Naive thymus-derived CD4-positive, alpha-beta T cell (primary cell): ENCODE measurements at regions of chr6 and their contacts with region 1.

Region 1: DNA sequence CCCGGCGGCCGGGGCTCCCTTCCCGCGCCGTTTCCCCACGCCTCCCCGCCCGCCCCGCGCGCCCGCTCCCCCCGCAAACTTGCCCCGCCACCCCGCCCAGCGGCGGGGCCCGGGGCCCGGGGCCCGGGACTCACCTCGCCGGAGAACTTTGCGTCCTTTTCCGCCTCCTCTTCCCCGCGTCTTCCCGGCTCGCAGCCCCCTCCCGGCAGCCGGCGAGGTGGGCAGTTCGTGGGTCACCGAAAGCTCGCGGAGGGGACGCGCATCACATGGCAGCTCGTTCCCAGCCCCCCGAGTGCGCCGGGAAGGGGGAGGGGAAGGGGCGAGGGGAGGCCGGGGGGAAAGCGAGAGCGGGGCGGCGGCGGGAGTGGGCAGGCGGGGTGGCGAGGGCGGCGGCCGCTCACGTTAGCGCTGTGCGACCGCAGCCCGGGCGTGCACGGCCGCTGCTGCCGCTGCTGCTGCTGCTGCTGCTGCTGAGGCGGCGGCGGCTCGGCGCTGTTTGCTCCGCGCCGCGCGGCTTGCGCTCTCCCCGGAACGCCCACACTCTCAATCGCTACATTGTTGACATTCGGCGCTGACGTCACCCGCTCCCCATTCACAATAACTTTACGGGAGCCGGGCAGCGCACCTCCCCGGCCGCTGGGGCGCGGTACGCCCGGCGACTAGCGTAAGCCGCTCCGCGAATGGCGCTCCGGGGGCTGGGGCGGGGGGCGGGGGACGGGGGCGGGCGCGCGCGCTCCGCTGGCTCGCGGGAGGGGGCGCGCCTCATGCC is at the start of gene BACH2:
- DNase-seq: peak; percentile 84 to 97 (median 94)
- ATAC-seq: peak; percentile 85
- H3K4me3 ChIP-seq: peak within 1 kb of the TSS; percentile 59
- H3K4me3 Mint-ChIP-seq: peak within 1 kb of the TSS; percentile 79 to 97 (median 92)
- H3K27ac ChIP-seq: peak within 1 kb of the TSS; percentile 95
- H3K27ac Mint-ChIP-seq: peak within 1 kb of the TSS; percentile 89 to 100 (median 97)
- H3K4me1 ChIP-seq: peaks cover 7 to 26% of the 10 kb centered on the region in 2 donors
- H3K4me1 Mint-ChIP-seq: peaks cover 0 to 47% (median 38%) of the 10 kb centered on the region in 7 donors
- H3K27me3 ChIP-seq: no peaks in the 10 kb centered on the region
- H3K27me3 Mint-ChIP-seq: peaks cover 0 to 29% (median 0%) of the 10 kb centered on the region in 5 donors
- total RNA-seq, gene BACH2: 33.0 to 193 (median 133) TPM

Region 2: GRCh38 chr6:89829591-89830385 is 466.7 kb before region 1 on chr6 and contains the start of gene CASP8AP2:
- CTCF ChIA-PET with region 1: no interaction called
- POLR2A ChIA-PET with region 1: interaction called, 3 read pairs
- intact Hi-C with region 1: loop called (anchors 2 kb)
- DNase-seq: peak; percentile 71 to 98 (median 96)
- ATAC-seq: peak; percentile 97
- H3K4me3 ChIP-seq: peak within 1 kb of the TSS; percentile 96
- H3K4me3 Mint-ChIP-seq: peak within 1 kb of the TSS; percentile 92 to 100 (median 99)
- H3K27ac ChIP-seq: peak within 1 kb of the TSS; percentile 83
- H3K27ac Mint-ChIP-seq: peak within 1 kb of the TSS; percentile 84 to 97 (median 95)
- H3K4me1 ChIP-seq: peaks cover 11 to 14% of the 10 kb centered on the region in 2 donors
- H3K4me1 Mint-ChIP-seq: peaks cover 11 to 47% (median 33%) of the 10 kb centered on the region in 7 donors
- H3K27me3 ChIP-seq: no peaks in the 10 kb centered on the region
- H3K27me3 Mint-ChIP-seq: no peaks in the 10 kb centered on the region
- total RNA-seq, gene CASP8AP2: 21.2 to 44.8 (median 34.5) TPM

Region 3: GRCh38 chr6:90121982-90122381 is 174.5 kb before region 1 on chr6:
- CTCF ChIA-PET with region 1: no interaction called
- POLR2A ChIA-PET with region 1: no interaction called
- intact Hi-C with region 1: loop called in 1 of 2 experiments (anchors 5 kb)
- DNase-seq: no peak
- ATAC-seq: peak; percentile 14
- H3K4me3 ChIP-seq: no peak overlapping the region
- H3K4me3 Mint-ChIP-seq: peak overlapping the region in 7 of 10 donors; percentile 15 to 70 (median 49)
- H3K27ac ChIP-seq: no peak overlapping the region
- H3K27ac Mint-ChIP-seq: peak overlapping the region in 8 of 9 donors; percentile 21 to 92 (median 85)
- H3K4me1 ChIP-seq: peaks cover 0 to 16% of the 10 kb centered on the region in 2 donors
- H3K4me1 Mint-ChIP-seq: peaks cover 17 to 91% (median 86%) of the 10 kb centered on the region in 7 donors
- H3K27me3 ChIP-seq: no peaks in the 10 kb centered on the region
- H3K27me3 Mint-ChIP-seq: no peaks in the 10 kb centered on the region

Region 4: DNA sequence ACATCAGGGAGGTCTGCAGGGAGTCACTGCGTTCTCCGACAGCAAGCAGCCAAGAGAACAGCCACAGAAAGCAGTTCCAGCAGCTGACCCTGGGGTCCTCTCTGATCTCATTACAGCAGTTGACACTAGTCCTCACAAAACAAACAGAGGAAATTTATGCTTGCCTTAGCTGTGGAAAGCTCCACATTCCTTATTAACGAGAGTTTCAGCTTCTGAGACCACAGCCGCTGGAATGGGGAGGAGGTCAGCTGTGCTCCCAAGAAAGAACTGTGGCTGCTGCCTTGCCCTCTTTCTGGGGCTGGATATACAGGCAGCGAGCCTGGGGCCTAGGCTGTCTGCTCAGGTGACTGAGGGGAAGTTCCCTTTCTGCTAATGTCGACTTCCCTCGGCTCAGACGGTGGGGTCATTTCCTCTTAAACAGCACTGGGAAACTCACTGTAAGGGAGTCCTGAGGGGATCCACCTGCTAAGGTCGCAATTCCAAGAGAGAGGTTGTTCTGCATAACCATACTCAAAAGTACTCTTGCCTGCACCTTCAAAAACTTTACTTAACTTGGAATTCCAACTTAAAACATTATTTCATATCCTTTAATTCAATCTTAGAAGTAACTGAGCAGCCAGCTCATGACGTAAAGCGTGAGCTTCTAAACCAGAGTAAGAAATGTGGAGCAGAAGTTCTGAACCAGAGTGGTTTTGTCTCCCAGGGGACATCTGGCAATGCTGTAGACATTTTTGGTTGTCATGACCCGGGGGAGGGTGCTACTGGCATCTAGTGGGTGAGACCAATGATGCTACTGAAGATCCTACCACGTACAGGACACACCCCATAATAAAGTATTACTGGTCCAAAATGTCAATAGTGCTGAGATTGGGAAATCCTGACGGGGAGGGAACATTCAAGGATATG is 80.2 kb before region 1 on chr6:
- CTCF ChIA-PET with region 1: interaction called, 3 read pairs
- POLR2A ChIA-PET with region 1: interaction called, 19 read pairs
- intact Hi-C with region 1: loop called (anchors 1 to 2 kb)
- DNase-seq: peak in 5 of 9 donors; percentile 61 to 82 (median 63)
- ATAC-seq: peak; percentile 69
- H3K4me3 ChIP-seq: peak overlapping the region; percentile 18
- H3K4me3 Mint-ChIP-seq: peak overlapping the region in 7 of 10 donors; percentile 42 to 74 (median 68)
- H3K27ac ChIP-seq: peak overlapping the region; percentile 85
- H3K27ac Mint-ChIP-seq: no peak overlapping the region
- H3K4me1 ChIP-seq: peaks cover 0 to 97% of the 10 kb centered on the region in 2 donors
- H3K4me1 Mint-ChIP-seq: peaks cover 0 to 33% (median 31%) of the 10 kb centered on the region in 7 donors
- H3K27me3 ChIP-seq: no peaks in the 10 kb centered on the region
- H3K27me3 Mint-ChIP-seq: no peaks in the 10 kb centered on the region

Region 5: GRCh38 chr6:90274451-90275030 is 22.0 kb before region 1 on chr6:
- CTCF ChIA-PET with region 1: interaction called, 4 read pairs
- POLR2A ChIA-PET with region 1: interaction called, 179 read pairs
- intact Hi-C with region 1: loop called (anchors 1 kb)
- DNase-seq: peak; percentile 57 to 99 (median 98)
- ATAC-seq: peak; percentile 96
- H3K4me3 ChIP-seq: peak overlapping the region; percentile 19
- H3K4me3 Mint-ChIP-seq: peak overlapping the region; percentile 73 to 90 (median 80)
- H3K27ac ChIP-seq: peak overlapping the region; percentile 99
- H3K27ac Mint-ChIP-seq: peak overlapping the region; percentile 80 to 100 (median 100)
- H3K4me1 ChIP-seq: peaks cover 18 to 85% of the 10 kb centered on the region in 2 donors
- H3K4me1 Mint-ChIP-seq: peaks cover 46 to 99% (median 89%) of the 10 kb centered on the region in 7 donors
- H3K27me3 ChIP-seq: no peaks in the 10 kb centered on the region
- H3K27me3 Mint-ChIP-seq: no peaks in the 10 kb centered on the region

Region 6: DNA sequence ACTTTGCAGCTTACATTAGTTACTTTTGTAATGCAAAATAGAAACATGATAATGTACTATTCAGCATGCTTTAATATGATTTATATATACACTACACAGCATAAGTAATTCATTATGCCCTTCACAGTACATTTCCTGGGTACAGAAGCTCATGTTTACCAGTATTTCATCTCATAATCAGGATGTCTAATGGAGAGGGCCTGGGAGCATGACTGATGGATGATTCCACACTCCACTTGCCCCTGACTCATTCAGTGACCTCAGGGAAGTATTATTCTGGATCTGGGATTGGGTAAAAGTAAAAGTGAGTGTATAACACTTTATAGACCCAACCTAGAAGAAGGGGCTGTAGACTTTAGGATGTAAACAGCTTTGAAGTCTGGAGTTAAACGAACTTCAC is 31.5 kb after region 1 on chr6:
- CTCF ChIA-PET with region 1: no interaction called
- POLR2A ChIA-PET with region 1: no interaction called
- intact Hi-C with region 1: no loop called
- DNase-seq: no peak
- ATAC-seq: no peak
- H3K4me3 ChIP-seq: no peak overlapping the region
- H3K4me3 Mint-ChIP-seq: no peak overlapping the region
- H3K27ac ChIP-seq: no peak overlapping the region
- H3K27ac Mint-ChIP-seq: no peak overlapping the region
- H3K4me1 ChIP-seq: no peaks in the 10 kb centered on the region
- H3K4me1 Mint-ChIP-seq: no peaks in the 10 kb centered on the region
- H3K27me3 ChIP-seq: no peaks in the 10 kb centered on the region
- H3K27me3 Mint-ChIP-seq: no peaks in the 10 kb centered on the region

Region 7: GRCh38 chr6:90370493-90370959 is 74.0 kb after region 1 on chr6:
- CTCF ChIA-PET with region 1: no interaction called
- POLR2A ChIA-PET with region 1: no interaction called
- intact Hi-C with region 1: no loop called
- DNase-seq: no peak
- ATAC-seq: no peak
- H3K4me3 ChIP-seq: no peak overlapping the region
- H3K4me3 Mint-ChIP-seq: peak overlapping the region in 1 of 10 donors; percentile 26
- H3K27ac ChIP-seq: no peak overlapping the region
- H3K27ac Mint-ChIP-seq: peak overlapping the region in 1 of 9 donors; percentile 38
- H3K4me1 ChIP-seq: no peaks in the 10 kb centered on the region
- H3K4me1 Mint-ChIP-seq: peaks cover 0 to 21% (median 8%) of the 10 kb centered on the region in 7 donors
- H3K27me3 ChIP-seq: no peaks in the 10 kb centered on the region
- H3K27me3 Mint-ChIP-seq: peaks cover 0 to 10% (median 0%) of the 10 kb centered on the region in 5 donors

Region 8: GRCh38 chr6:90393232-90393884 is 96.8 kb after region 1 on chr6:
- CTCF ChIA-PET with region 1: interaction called, 6 read pairs
- POLR2A ChIA-PET with region 1: interaction called, 5 read pairs
- intact Hi-C with region 1: loop called (anchors 1 to 2 kb)
- DNase-seq: peak; percentile 43 to 87 (median 81)
- ATAC-seq: peak; percentile 81
- H3K4me3 ChIP-seq: no peak overlapping the region
- H3K4me3 Mint-ChIP-seq: peak overlapping the region in 9 of 10 donors; percentile 2 to 59 (median 26)
- H3K27ac ChIP-seq: no peak overlapping the region
- H3K27ac Mint-ChIP-seq: peak overlapping the region; percentile 7 to 77 (median 26)
- H3K4me1 ChIP-seq: peaks cover 18 to 29% of the 10 kb centered on the region in 2 donors
- H3K4me1 Mint-ChIP-seq: peaks cover 15 to 43% (median 38%) of the 10 kb centered on the region in 7 donors
- H3K27me3 ChIP-seq: no peaks in the 10 kb centered on the region
- H3K27me3 Mint-ChIP-seq: peaks cover 0 to 4% (median 0%) of the 10 kb centered on the region in 5 donors

Region 9: DNA sequence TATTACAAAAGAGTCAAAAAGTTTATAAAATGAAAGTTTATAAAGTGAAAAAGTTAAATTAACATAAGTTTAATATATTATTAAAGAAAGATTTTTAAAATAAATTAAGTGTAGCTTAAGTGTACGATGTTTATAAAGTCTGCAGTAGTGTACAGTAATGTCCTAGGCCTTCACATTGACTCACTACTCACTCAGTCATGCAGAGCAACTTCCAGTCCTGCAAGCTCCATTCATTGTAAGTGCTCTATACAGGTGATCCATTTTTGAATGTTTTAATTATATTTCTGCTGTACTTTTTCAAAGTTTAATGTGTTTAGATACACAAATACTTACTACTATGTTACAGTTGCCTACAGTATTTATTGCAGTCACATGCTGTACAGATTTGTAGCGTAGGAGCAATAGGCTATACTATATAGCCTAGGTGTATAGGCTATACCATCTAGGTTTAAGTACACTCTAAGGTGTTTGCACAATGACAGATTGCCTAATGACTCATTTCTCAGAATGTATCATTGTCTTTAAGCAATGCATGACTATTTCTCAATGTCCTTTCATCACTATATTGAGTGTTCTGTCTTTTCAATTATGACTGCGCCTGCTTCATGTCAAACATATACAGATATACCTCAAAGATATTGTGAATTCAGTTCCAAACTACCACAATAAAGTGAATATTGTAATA is 1400.6 kb after region 1 on chr6:
- CTCF ChIA-PET with region 1: no interaction called
- POLR2A ChIA-PET with region 1: no interaction called
- intact Hi-C with region 1: no loop called
- DNase-seq: no peak
- ATAC-seq: no peak
- H3K4me3 ChIP-seq: no peak overlapping the region
- H3K4me3 Mint-ChIP-seq: no peak overlapping the region
- H3K27ac ChIP-seq: no peak overlapping the region
- H3K27ac Mint-ChIP-seq: no peak overlapping the region
- H3K4me1 ChIP-seq: no peaks in the 10 kb centered on the region
- H3K4me1 Mint-ChIP-seq: no peaks in the 10 kb centered on the region
- H3K27me3 ChIP-seq: no peaks in the 10 kb centered on the region
- H3K27me3 Mint-ChIP-seq: no peaks in the 10 kb centered on the region